Activated CD4-positive, alpha-beta T cell treated with anti-CD3 and anti-CD28 coated beads, Interleukin-2, amount 10 ng/mL, durations not matched to agents 24 days and 14 days (primary cell): ENCODE measurements at regions of chr1 and their contacts with region 1.

Region 1: DNA sequence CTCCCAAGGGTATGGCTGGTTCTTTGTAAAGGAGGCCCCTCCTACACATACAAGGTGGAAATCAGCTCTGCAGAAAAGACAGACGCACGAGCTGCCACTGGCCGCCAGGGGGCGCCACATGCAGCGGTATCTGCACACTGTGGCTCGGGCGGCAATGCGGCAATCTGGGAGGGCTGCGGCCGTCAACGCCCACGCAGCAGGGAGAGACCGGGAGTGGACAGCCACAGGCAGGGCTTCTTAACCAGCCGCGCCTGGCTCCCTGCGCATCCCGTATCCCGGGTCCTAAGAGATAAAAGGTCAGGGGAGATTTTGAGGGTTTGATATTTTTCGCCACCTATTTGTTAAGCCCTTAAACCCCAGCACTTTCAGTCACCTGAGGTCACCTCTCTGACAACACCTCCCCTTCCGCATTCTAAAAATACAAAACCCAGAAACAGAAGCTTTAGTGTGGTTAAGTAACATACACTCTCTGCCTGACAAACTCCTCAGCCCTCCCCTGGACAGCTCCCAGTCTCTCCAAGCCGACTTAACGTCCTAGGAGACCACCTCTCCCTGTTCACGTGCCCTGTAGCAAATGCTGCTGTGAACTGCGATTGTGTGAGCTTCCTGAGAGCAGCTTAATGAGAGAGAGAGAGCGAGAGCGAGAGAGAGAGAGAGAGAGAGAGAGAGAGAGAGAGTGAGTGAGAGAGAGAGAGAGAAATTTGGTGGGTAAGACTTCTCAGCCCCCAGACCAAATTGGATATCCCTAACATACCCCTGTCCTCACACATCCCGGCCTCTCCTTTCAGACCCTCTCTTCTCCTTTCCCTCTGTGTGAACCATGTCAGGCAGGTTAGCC is 13.5 kb upstream of the KCNA2 start:
- DNase-seq: peak; percentile 97
- H3K4me3 Mint-ChIP-seq: peak overlapping the region; percentile 86
- H3K27ac Mint-ChIP-seq: peak overlapping the region; percentile 79
- H3K4me1 Mint-ChIP-seq: peaks cover 46% of the 10 kb centered on the region
- H3K27me3 Mint-ChIP-seq: peaks cover 4% of the 10 kb centered on the region

Region 2: DNA sequence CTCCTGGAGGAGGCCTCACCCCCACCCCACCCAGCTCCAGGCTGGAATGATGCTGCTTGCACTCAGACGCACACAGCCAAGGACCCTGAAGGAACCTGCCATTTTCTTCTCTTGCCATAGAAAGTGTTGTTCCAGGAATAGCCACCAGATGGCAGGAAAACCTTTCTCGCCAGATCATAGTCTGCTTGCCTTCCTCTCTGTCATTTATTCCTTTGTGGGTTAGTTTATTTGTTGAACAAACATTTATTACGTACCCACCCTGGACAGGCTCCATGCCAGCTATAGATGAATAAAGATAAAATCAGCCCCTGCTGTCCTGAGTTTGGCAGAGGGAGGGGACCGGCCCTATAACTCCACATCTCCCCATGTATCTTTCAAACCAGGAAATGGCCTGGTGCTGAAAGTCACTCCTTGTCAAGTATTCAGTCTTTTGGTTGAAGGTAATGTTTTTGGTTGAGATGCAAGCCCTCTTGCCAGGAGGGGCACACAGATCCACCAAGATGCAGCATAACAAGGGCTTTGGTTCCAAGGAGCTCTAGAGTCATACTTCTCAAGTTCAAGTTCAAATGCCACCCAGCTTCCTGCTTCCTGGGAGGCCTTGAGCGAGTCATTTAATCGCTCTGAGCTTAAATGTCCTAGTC is 416.5 kb before region 1 on chr1:
- intact Hi-C with region 1: loop called (anchors 2 kb)
- DNase-seq: peak; percentile 94
- H3K4me3 Mint-ChIP-seq: no peak overlapping the region
- H3K27ac Mint-ChIP-seq: peak overlapping the region; percentile 90
- H3K4me1 Mint-ChIP-seq: peaks cover 13% of the 10 kb centered on the region
- H3K27me3 Mint-ChIP-seq: no peaks in the 10 kb centered on the region

Region 3: GRCh38 chr1:110524311-110525251 is 95.0 kb before region 1 on chr1:
- intact Hi-C with region 1: loop called (anchors 1 kb)
- DNase-seq: peak; percentile 85
- H3K4me3 Mint-ChIP-seq: no peak overlapping the region
- H3K27ac Mint-ChIP-seq: no peak overlapping the region
- H3K4me1 Mint-ChIP-seq: peaks cover 4% of the 10 kb centered on the region
- H3K27me3 Mint-ChIP-seq: peaks cover 27% of the 10 kb centered on the region

Region 4: DNA sequence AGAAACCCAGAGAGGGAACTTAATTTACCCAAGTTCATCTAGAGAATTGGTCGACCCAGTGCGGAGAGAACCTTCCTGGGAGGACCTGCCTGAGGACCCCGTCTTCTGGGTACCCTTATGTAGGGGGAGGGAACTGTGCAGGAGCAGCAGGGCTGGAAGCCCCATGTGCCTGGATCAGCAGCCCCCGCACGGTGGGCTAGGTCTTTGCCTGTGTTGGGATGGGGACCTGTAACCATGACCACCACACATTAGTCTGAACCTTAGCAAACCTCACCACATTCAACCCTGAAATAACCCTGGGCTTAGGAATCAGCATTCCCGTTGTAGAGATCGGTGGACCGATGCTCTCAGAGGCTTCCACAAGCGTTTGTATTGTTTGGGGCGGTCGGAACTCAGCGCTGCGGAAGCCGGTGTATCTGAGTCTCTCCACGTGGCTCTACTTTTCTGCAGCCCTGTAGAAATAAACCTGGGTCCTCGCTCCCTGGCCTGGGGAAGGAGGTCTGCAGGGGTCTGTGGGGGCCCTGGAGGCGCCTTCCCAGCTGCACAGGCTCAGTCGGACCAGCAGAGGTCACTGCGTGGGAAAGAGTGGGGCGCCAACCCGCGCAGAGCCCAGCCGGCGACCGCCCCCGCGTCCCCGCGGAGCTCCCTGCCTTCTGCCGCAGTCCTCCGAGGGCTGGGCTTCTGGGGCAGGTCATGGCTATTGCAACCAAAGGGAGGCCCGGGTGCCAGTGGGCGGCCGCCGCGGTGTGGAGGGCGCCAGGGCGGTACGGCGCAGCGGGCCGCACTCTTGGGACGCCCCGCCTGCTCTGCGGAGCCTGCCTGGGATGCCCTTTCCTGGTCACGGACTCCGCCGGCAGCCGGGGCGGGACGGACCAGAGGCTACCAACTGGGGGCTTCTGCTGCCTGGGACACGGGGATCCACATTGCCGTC is 64.5 kb before region 1 on chr1:
- intact Hi-C with region 1: loop called (anchors 2 kb)
- DNase-seq: peak; percentile 86
- H3K4me3 Mint-ChIP-seq: no peak overlapping the region
- H3K27ac Mint-ChIP-seq: no peak overlapping the region
- H3K4me1 Mint-ChIP-seq: no peaks in the 10 kb centered on the region
- H3K27me3 Mint-ChIP-seq: peaks cover 67% of the 10 kb centered on the region

Region 5: GRCh38 chr1:110766025-110766647 is 146.5 kb after region 1 on chr1:
- intact Hi-C with region 1: loop called (anchors 1 kb)
- DNase-seq: peak; percentile 86
- H3K4me3 Mint-ChIP-seq: peak overlapping the region; percentile 2
- H3K27ac Mint-ChIP-seq: no peak overlapping the region
- H3K4me1 Mint-ChIP-seq: peaks cover 9% of the 10 kb centered on the region
- H3K27me3 Mint-ChIP-seq: peaks cover 33% of the 10 kb centered on the region